CD4-positive, alpha-beta memory T cell (primary cell): ENCODE measurements at regions of chr10 and their contacts with region 1.

Region 1: DNA sequence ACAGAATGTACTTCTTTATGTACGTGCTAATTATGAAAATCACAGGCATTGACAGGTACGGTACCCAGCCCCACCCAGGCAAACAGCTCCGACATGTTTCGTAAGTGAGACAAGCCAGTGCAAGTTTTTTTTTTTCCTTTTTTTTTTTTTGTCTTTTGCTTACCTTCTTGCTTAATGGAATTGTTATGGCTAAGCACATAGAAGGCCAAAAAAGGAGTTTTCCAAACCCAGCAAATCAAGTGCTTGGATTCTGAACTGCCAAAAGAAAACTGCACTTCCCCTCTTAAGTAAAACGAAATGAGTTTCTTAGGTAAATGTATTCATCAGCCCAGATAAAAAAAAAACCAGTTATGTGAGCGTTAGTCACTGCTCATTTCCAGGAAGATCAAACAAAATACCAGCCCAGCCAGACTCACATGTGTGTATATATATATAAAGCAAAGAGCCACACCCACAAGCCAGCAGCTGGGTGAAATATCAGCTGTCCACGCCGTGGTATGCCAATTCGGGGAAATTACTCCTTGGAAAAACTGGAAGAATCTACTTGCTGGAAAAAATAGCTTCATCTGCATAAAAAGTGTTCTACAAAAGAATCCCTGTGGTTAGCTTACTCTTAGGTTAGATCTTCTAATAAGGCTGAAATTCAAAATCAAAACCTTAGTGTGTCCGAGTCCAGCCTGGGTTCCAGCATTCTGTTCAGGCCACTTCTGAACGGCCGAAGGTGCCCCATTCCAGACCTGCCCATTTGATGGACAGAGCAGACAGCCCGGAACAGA is 8.0 kb downstream of the KLF6 start:
- DNase-seq: peak; percentile 75 to 87 (median 81)
- H3K4me3 ChIP-seq: peak overlapping the region in 1 of 2 donors; percentile 6
- H3K4me3 Mint-ChIP-seq: peak overlapping the region; percentile 22 to 97 (median 70)
- H3K27ac ChIP-seq: peak overlapping the region; percentile 48
- H3K27ac Mint-ChIP-seq: peak overlapping the region; percentile 63 to 100 (median 97)
- H3K4me1 ChIP-seq: peaks cover 81% of the 10 kb centered on the region
- H3K4me1 Mint-ChIP-seq: peaks cover 51 to 84% (median 68%) of the 10 kb centered on the region in 4 donors
- H3K27me3 ChIP-seq: no peaks in the 10 kb centered on the region
- H3K27me3 Mint-ChIP-seq: no peaks in the 10 kb centered on the region

Region 2: DNA sequence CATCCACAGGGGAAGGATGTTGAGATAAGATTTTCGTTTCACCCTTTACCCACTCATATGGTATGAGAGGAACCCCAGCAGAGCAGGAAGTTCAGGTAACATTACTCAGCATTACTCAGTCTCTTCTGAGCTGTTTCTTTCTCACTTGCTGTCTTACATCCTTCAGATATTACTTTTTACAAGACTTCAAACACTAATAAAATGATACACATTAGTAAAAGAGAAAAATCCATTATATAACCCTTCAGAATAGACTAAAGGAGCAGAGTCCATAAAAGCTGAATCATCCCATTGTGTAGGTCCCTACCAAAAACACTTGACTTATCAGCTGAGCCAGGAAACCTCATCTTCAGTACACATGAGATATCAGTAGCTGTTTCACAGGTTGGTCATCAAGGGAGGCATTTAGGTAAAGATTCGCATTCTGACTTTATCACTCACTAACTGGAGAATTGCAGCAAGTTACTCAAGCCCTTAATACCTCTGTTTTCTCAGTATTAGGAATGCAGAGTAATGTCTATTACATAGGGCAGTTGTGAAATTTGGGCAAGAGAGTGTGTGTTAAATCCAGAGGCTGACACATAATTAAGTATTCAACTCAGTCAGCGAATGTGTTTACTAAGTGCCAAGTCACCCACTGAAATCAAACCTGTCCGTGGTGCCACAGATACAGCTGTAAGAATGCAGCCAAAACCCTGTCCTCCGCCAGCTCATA is 36.7 kb before region 1 on chr10:
- CTCF ChIA-PET with region 1: interaction called, 4 read pairs
- POLR2A ChIA-PET with region 1: interaction called, 79 read pairs
- intact Hi-C with region 1: no loop called
- DNase-seq: peak in 2 of 5 donors; percentile 6 to 21
- H3K4me3 ChIP-seq: no peak overlapping the region
- H3K4me3 Mint-ChIP-seq: peak overlapping the region in 6 of 8 donors; percentile 13 to 61 (median 46)
- H3K27ac ChIP-seq: no peak overlapping the region
- H3K27ac Mint-ChIP-seq: peak overlapping the region in 6 of 7 donors; percentile 2 to 82 (median 54)
- H3K4me1 ChIP-seq: peaks cover 17% of the 10 kb centered on the region
- H3K4me1 Mint-ChIP-seq: peaks cover 19 to 31% (median 23%) of the 10 kb centered on the region in 4 donors
- H3K27me3 ChIP-seq: no peaks in the 10 kb centered on the region
- H3K27me3 Mint-ChIP-seq: no peaks in the 10 kb centered on the region

Region 3: DNA sequence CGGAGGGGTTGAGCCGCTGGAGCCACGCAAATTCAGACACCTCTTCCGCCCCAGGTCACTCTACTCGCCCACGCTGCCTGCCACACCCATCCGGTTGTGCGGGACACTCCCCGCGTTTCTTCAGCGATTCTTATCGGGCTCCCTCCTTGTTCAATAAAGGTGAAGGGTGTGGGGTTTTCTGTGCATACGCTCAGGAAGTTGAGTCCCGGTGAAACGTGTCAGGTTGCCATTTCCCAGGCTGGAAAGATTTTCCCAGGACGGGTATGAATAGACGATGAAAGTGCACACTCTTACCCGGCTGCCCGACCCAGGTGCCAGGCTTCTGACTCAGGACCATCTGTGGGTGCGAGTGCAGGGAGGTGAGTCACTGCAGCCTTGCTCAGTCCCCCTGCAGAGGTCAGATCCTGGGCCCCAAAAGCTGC is 13.9 kb before region 1 on chr10:
- CTCF ChIA-PET with region 1: interaction called, 14 read pairs
- POLR2A ChIA-PET with region 1: interaction called, 201 read pairs
- intact Hi-C with region 1: loop called (anchors 1 kb)
- DNase-seq: no peak
- H3K4me3 ChIP-seq: no peak overlapping the region
- H3K4me3 Mint-ChIP-seq: peak overlapping the region; percentile 20 to 72 (median 62)
- H3K27ac ChIP-seq: no peak overlapping the region
- H3K27ac Mint-ChIP-seq: peak overlapping the region in 6 of 7 donors; percentile 59 to 88 (median 82)
- H3K4me1 ChIP-seq: peaks cover 91% of the 10 kb centered on the region
- H3K4me1 Mint-ChIP-seq: peaks cover 53 to 92% (median 75%) of the 10 kb centered on the region in 4 donors
- H3K27me3 ChIP-seq: no peaks in the 10 kb centered on the region
- H3K27me3 Mint-ChIP-seq: no peaks in the 10 kb centered on the region

Region 4: DNA sequence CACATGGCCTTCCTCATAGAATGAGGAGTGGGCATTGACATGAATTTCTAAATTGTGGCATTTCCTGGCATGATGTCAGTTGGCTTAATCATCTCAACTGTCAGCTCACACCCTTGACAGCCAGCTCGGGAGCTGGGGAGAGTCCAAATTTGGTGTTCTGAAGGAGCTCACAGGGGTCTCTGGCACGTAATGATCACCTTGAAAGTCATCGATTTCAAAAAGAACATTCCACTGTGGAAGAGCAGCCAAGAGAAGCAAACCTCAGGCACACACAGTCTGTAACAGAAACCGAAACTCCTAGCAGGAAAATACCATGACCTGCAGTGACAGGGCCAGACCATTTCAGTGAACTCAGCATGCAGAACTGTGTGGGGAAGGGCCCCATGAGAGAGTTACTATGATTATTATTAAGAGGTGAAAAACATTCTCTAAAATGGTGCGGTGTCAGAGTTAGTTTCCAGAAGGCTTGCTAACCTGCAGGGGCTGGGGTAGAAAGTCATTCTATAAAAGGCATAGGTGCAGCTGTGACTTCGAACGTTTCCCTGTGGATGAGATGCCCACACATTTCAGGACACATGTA is 34.4 kb after region 1 on chr10:
- CTCF ChIA-PET with region 1: interaction called, 39 read pairs
- POLR2A ChIA-PET with region 1: interaction called, 1,468 read pairs
- intact Hi-C with region 1: loop called (anchors 5 kb)
- DNase-seq: peak; percentile 49 to 79 (median 66)
- H3K4me3 ChIP-seq: peak overlapping the region; percentile 1 to 39
- H3K4me3 Mint-ChIP-seq: peak overlapping the region; percentile 76 to 87 (median 82)
- H3K27ac ChIP-seq: peak overlapping the region; percentile 99
- H3K27ac Mint-ChIP-seq: no peak overlapping the region
- H3K4me1 ChIP-seq: peaks cover 79% of the 10 kb centered on the region
- H3K4me1 Mint-ChIP-seq: peaks cover 18 to 89% (median 66%) of the 10 kb centered on the region in 4 donors
- H3K27me3 ChIP-seq: no peaks in the 10 kb centered on the region
- H3K27me3 Mint-ChIP-seq: no peaks in the 10 kb centered on the region

Region 5: GRCh38 chr10:3887885-3888476 is 111.0 kb after region 1 on chr10:
- CTCF ChIA-PET with region 1: interaction called, 6 read pairs
- POLR2A ChIA-PET with region 1: interaction called, 289 read pairs
- intact Hi-C with region 1: loop called (anchors 2 kb)
- DNase-seq: peak; percentile 70 to 94 (median 74)
- H3K4me3 ChIP-seq: no peak overlapping the region
- H3K4me3 Mint-ChIP-seq: peak overlapping the region; percentile 62 to 82 (median 70)
- H3K27ac ChIP-seq: peak overlapping the region; percentile 77
- H3K27ac Mint-ChIP-seq: peak overlapping the region; percentile 91 to 99 (median 98)
- H3K4me1 ChIP-seq: peaks cover 53% of the 10 kb centered on the region
- H3K4me1 Mint-ChIP-seq: peaks cover 23 to 68% (median 49%) of the 10 kb centered on the region in 4 donors
- H3K27me3 ChIP-seq: no peaks in the 10 kb centered on the region
- H3K27me3 Mint-ChIP-seq: no peaks in the 10 kb centered on the region